ENCODE measurements at regions of chr15 and their contacts with region 1.

Region 1: GRCh38 chr15:23854203-23854911 is 167.3 kb upstream of the NDN start:
- DNase-seq: no peak
- ATAC-seq: peak; percentile 71
- H3K4me3 Mint-ChIP-seq: no peak overlapping the region
- H3K27ac Mint-ChIP-seq: no peak overlapping the region; the same call in 1 of the 2 replicates
- H3K4me1 Mint-ChIP-seq: peaks cover 30% of the 10 kb centered on the region
- H3K27me3 Mint-ChIP-seq: peaks cover 10% of the 10 kb centered on the region
- CTCF ChIP-seq: no peak

Region 2: GRCh38 chr15:23839893-23840474 is 14.4 kb before region 1 on chr15:
- CTCF ChIA-PET with region 1: no interaction called
- POLR2A ChIA-PET with region 1: interaction called, 10 read pairs
- DNase-seq: no peak
- ATAC-seq: no peak
- H3K4me3 Mint-ChIP-seq: no peak overlapping the region
- H3K27ac Mint-ChIP-seq: no peak overlapping the region
- H3K4me1 Mint-ChIP-seq: no peaks in the 10 kb centered on the region
- H3K27me3 Mint-ChIP-seq: peaks cover 3% of the 10 kb centered on the region; the same call in 1 of the 2 replicates
- CTCF ChIP-seq: no peak

Measured in WTC11 (cell line).